Mammary epithelial cell (primary cell): ENCODE measurements at regions of chr3 and their contacts with region 1.

Region 1: DNA sequence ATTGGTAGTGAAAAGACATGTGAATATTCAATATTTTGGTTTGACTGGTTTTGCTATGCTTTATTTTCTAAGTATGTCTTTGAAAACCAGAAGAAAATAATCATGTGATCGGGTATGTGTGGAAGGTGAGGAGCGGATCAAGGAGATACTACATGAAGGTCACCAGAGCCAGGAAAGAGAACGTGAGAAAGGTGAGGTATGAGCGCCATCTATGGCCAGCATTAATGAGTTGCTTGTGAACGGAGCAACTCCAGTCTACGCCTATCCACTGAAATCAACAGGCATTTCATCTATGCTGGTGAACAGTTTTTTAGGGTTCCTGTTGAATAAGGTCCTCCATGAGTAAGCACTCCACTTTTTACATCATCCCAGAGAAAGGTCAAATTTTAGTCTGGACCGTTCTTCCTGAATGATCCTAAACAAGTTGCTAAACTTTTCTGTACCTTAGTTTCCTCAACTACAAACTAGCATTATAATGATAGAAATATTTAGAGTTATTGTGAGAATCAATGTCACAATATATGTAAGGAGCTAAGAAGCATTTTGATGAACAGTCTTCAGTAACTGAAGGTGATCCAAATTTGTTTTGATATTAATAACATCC is 1435.2 kb upstream of the CADM2 start:
- DNase-seq: peak; percentile 44
- H3K4me3 ChIP-seq: no peak overlapping the region
- H3K27ac ChIP-seq: no peak overlapping the region
- H3K4me1 ChIP-seq: no peaks in the 10 kb centered on the region
- H3K27me3 ChIP-seq: no peaks in the 10 kb centered on the region
- CTCF ChIP-seq: peak; percentile 71 to 83

Region 2: GRCh38 chr3:81666493-81667121 is 1857.0 kb before region 1 on chr3:
- CTCF ChIA-PET with region 1: no interaction called
- dilution Hi-C with region 1: no loop called
- in situ Hi-C with region 1: no loop called
- intact Hi-C with region 1: loop called (anchors 10 kb)
- DNase-seq: no peak
- H3K4me3 ChIP-seq: no peak overlapping the region
- H3K27ac ChIP-seq: no peak overlapping the region
- H3K4me1 ChIP-seq: no peaks in the 10 kb centered on the region
- H3K27me3 ChIP-seq: no peaks in the 10 kb centered on the region
- CTCF ChIP-seq: peak; percentile 56 to 71

Region 3: DNA sequence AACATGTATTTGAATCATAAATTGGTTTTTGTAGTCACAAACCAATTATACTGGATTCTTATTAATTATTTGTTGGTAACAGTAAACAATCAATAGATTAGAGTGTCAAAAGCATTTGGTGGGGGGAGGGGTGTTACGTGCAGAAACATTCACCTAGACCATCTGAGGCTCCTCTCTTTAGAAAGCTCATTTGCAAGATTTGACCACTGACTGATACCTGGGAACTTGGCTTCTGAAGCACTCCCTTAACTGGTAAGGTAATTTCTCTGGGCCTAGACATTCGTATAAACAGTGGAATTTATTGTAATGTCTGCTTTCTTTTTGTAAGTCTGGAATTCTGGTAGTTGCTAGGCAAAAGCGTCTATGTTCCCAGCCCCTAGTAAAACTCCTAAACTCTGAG is 1518.3 kb before region 1 on chr3:
- CTCF ChIA-PET with region 1: no interaction called
- dilution Hi-C with region 1: no loop called
- in situ Hi-C with region 1: no loop called
- intact Hi-C with region 1: loop called (anchors 5 kb)
- DNase-seq: no peak
- H3K4me3 ChIP-seq: no peak overlapping the region
- H3K27ac ChIP-seq: no peak overlapping the region
- H3K4me1 ChIP-seq: no peaks in the 10 kb centered on the region
- H3K27me3 ChIP-seq: no peaks in the 10 kb centered on the region
- CTCF ChIP-seq: no peak

Region 4: GRCh38 chr3:82496890-82497560 is 1026.5 kb before region 1 on chr3:
- CTCF ChIA-PET with region 1: no interaction called
- dilution Hi-C with region 1: no loop called
- in situ Hi-C with region 1: no loop called
- intact Hi-C with region 1: loop called (anchors 1 kb)
- DNase-seq: peak; percentile 8
- H3K4me3 ChIP-seq: no peak overlapping the region
- H3K27ac ChIP-seq: no peak overlapping the region
- H3K4me1 ChIP-seq: no peaks in the 10 kb centered on the region
- H3K27me3 ChIP-seq: no peaks in the 10 kb centered on the region
- CTCF ChIP-seq: peak; percentile 41 to 59

Region 5: DNA sequence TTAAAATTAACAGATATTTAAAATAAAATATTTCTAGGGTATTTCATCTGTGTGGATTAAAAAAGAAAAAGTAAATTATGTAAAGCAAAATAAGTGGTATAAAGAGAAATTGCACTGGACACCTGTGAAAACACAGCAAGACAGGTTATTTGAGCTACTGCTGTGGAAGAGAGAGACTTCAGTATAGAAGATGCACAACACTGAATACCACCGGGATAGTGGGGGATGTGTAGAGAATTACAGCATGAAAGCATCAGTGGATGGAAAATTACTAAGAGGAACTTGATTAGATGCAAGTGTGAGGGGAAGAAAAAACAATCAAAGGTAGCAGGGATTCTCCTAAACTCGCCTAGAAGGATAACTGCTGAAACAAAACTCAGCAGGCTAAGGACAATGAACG is 519.7 kb before region 1 on chr3:
- CTCF ChIA-PET with region 1: no interaction called
- dilution Hi-C with region 1: no loop called
- in situ Hi-C with region 1: no loop called
- intact Hi-C with region 1: no loop called
- DNase-seq: no peak
- H3K4me3 ChIP-seq: no peak overlapping the region
- H3K27ac ChIP-seq: no peak overlapping the region
- H3K4me1 ChIP-seq: no peaks in the 10 kb centered on the region
- H3K27me3 ChIP-seq: no peaks in the 10 kb centered on the region
- CTCF ChIP-seq: no peak

Region 6: DNA sequence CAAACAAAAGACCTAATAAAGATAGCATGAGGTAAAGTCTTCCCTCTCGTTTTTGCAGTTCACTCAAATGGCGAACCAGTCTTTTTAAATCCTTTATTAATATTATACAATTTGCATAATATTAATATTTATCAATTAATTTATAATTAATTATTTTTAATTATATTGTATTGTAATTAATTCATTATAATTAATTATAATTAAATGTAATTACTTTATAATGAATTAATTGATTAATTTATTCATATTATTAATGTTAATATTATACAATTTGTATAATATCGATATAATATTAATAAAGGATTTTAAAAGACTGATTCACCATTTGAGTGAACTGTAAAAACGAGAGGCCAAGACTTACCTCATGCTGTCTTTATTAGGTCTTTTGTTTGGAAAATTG is 389.8 kb after region 1 on chr3:
- CTCF ChIA-PET with region 1: no interaction called
- dilution Hi-C with region 1: no loop called
- in situ Hi-C with region 1: no loop called
- intact Hi-C with region 1: no loop called
- DNase-seq: no peak
- H3K4me3 ChIP-seq: no peak overlapping the region
- H3K27ac ChIP-seq: no peak overlapping the region
- H3K4me1 ChIP-seq: no peaks in the 10 kb centered on the region
- H3K27me3 ChIP-seq: no peaks in the 10 kb centered on the region
- CTCF ChIP-seq: no peak